Calu3 (cell line): ENCODE measurements at regions of chr6 and their contacts with region 1.

Region 1: GRCh38 chr6:42217519-42218367 is at the start of gene MRPS10:
- DNase-seq: peak; percentile 95
- H3K4me3 Mint-ChIP-seq: peak within 1 kb of the TSS; percentile 96
- H3K27ac Mint-ChIP-seq: peak within 1 kb of the TSS; percentile 99
- H3K4me1 Mint-ChIP-seq: peaks cover 33% of the 10 kb centered on the region
- H3K27me3 Mint-ChIP-seq: no peaks in the 10 kb centered on the region
- CTCF ChIP-seq: no peak
- total RNA-seq, gene MRPS10: 48.1 and 50.0 TPM in 2 replicates

Region 2: DNA sequence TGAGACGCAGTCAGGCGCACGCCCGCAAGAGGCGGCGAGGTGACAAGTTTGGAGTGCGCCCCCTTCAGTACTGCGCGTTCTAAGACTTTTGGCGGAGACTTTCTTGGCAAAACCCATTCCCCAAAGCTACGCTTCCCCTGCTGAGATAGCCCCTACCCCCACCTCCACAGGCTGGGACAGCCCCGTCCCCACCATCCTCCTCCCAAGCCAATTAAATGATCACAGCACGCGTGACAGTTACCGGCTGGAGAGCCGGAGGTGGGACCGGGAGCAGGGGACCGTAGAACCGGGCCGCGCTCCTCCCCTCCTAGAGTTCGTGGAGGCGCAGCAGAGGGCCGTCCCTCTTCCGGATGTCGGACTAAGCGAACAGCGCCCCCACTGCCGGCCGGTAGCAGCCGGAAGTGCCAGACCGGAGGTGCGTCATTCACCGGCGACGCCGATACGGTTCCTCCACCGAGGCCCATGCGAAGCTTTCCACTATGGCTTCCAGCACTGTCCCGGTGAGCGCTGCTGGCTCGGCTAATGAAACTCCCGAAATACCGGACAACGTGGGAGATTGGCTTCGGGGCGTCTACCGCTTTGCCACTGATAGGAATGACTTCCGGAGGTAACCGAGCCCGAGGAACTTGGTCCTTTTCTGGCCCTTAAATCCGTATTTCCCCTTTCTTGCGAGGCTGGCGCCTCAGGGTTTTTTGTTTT is 430.4 kb before region 1 on chr6 and contains the start of gene TOMM6:
- CTCF ChIA-PET with region 1: no interaction called
- intact Hi-C with region 1: loop called (anchors 10 kb)
- DNase-seq: peak; percentile 98
- H3K4me3 Mint-ChIP-seq: peak within 1 kb of the TSS; percentile 95
- H3K27ac Mint-ChIP-seq: peak within 1 kb of the TSS; percentile 94
- H3K4me1 Mint-ChIP-seq: peaks cover 36% of the 10 kb centered on the region
- H3K27me3 Mint-ChIP-seq: no peaks in the 10 kb centered on the region
- CTCF ChIP-seq: peak; percentile 95
- total RNA-seq, gene TOMM6: 251 and 265 TPM in 2 replicates

Region 3: DNA sequence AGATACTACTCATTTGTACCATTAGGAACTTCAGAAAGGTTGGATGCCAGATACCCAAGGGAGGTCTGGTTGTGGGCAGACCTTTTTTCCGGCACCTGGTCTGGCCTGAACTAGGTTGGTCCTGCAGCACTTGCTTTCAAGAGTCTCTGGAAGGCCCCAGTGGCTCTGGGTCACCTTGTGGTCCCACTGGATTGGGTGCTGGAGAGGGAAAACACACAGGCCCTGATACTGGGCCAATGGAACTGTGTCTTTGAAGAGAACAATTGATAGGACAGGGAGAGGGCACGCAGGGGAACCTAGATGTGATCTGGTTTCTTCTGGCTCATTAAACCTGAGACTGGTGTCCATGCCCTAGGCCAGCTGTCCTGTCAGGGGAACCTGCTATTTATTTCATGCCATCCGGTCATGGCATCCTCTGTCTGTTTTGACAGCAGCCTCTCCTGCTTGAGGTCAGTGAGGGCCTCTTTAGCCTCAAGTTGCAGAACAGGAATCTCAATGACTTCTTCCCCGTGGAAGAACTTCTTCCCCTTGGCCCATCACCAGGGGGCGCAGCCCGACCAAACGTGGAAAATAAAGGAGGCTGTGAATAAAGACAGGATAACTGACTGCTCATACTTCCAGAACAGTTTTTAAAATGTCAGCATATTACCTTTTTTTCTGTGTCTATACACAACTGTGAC is 142.4 kb before region 1 on chr6:
- CTCF ChIA-PET with region 1: interaction called, 7 read pairs
- intact Hi-C with region 1: loop called (anchors 1 kb)
- DNase-seq: peak; percentile 93
- H3K4me3 Mint-ChIP-seq: no peak overlapping the region
- H3K27ac Mint-ChIP-seq: no peak overlapping the region
- H3K4me1 Mint-ChIP-seq: no peaks in the 10 kb centered on the region
- H3K27me3 Mint-ChIP-seq: no peaks in the 10 kb centered on the region
- CTCF ChIP-seq: peak; percentile 87

Region 4: GRCh38 chr6:42136508-42137193 is 81.1 kb before region 1 on chr6:
- CTCF ChIA-PET with region 1: interaction called, 11 read pairs
- intact Hi-C with region 1: no loop called
- DNase-seq: peak; percentile 64
- H3K4me3 Mint-ChIP-seq: peak overlapping the region; percentile 55
- H3K27ac Mint-ChIP-seq: peak overlapping the region; percentile 79
- H3K4me1 Mint-ChIP-seq: peaks cover 74% of the 10 kb centered on the region
- H3K27me3 Mint-ChIP-seq: no peaks in the 10 kb centered on the region
- CTCF ChIP-seq: peak; percentile 36

Region 5: DNA sequence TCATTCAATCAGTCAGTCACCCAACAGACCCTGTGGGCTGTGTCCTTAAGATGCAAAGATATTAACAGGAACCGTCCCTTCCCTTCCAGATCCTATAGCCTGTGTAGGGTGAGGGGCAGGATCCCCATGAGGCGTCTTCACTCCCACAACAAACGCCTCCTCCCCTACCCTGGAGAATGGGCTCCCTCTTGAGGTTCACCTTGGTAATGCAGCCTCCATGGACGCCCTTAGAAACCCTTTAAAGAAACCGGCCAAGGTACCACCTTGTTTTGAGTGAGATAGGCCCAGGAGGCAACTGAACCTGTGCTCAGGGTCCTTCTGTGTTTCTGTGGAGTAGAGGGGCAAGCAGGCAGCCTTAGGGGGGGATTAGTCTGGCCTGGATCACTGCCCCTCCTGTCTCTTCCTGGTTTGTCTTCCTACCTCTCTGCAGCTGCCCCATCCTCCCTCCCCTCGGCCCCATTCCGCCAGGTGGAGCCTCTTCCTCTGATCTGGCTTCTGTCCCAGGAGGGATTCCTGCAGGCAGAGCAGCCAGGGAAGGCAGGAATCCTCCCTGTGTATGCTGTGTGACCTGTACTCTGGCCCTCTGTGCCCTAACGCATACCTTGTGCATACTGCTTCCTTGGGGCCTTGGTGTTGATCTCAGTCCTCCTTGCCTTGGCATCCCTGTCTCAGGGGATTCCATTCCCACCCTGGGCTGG is 51.1 kb before region 1 on chr6:
- CTCF ChIA-PET with region 1: interaction called, 4 read pairs
- intact Hi-C with region 1: loop called (anchors 2 kb)
- DNase-seq: peak; percentile 90
- H3K4me3 Mint-ChIP-seq: no peak overlapping the region
- H3K27ac Mint-ChIP-seq: peak overlapping the region; percentile 54
- H3K4me1 Mint-ChIP-seq: peaks cover 11% of the 10 kb centered on the region
- H3K27me3 Mint-ChIP-seq: no peaks in the 10 kb centered on the region
- CTCF ChIP-seq: peak; percentile 94

Region 6: GRCh38 chr6:42879372-42880239 is 661.9 kb after region 1 on chr6 and contains the start of gene RPL7L1:
- CTCF ChIA-PET with region 1: no interaction called
- intact Hi-C with region 1: loop called (anchors 10 kb)
- DNase-seq: peak; percentile 88
- H3K4me3 Mint-ChIP-seq: peak within 1 kb of the TSS; percentile 87
- H3K27ac Mint-ChIP-seq: peak within 1 kb of the TSS; percentile 99
- H3K4me1 Mint-ChIP-seq: no peaks in the 10 kb centered on the region
- H3K27me3 Mint-ChIP-seq: no peaks in the 10 kb centered on the region
- CTCF ChIP-seq: no peak
- total RNA-seq, gene RPL7L1: 144 and 154 TPM in 2 replicates